ENCODE measurements at regions of chr5 and their contacts with region 1.

Region 1: GRCh38 chr5:32312647-32313523 is at the start of gene MTMR12:
- DNase-seq: peak; percentile 100
- ATAC-seq: peak; percentile 99
- total RNA-seq, gene MTMR12: 18.7 TPM

Region 2: GRCh38 chr5:32274548-32275395 is 38.1 kb before region 1 on chr5:
- intact Hi-C with region 1: loop called (anchors 2 kb)
- DNase-seq: no peak
- ATAC-seq: no peak

Measured in Right ventricle myocardium inferior (tissue), 1 donor.